Activated CD4-positive, alpha-beta memory T cell treated with anti-CD3 and anti-CD28 coated beads for 36 hours (primary cell): ENCODE measurements at regions of chr12 and their contacts with region 1.

Region 1: GRCh38 chr12:44847888-44848702 is 28.0 kb downstream of the NELL2 start:
- DNase-seq: peak; percentile 81
- H3K4me3 Mint-ChIP-seq: peak overlapping the region; percentile 69
- H3K27ac Mint-ChIP-seq: peak overlapping the region; percentile 94
- H3K4me1 Mint-ChIP-seq: peaks cover 79% of the 10 kb centered on the region
- H3K27me3 Mint-ChIP-seq: no peaks in the 10 kb centered on the region

Region 2: GRCh38 chr12:44827832-44828438 is 20.2 kb before region 1 on chr12:
- CTCF ChIA-PET with region 1: interaction called, 4 read pairs
- POLR2A ChIA-PET with region 1: interaction called, 8 read pairs
- intact Hi-C with region 1: loop called (anchors 1 kb)
- DNase-seq: no peak
- H3K4me3 Mint-ChIP-seq: peak overlapping the region; percentile 42
- H3K27ac Mint-ChIP-seq: peak overlapping the region; percentile 89
- H3K4me1 Mint-ChIP-seq: peaks cover 57% of the 10 kb centered on the region
- H3K27me3 Mint-ChIP-seq: no peaks in the 10 kb centered on the region

Region 3: GRCh38 chr12:44835641-44836379 is 12.3 kb before region 1 on chr12:
- CTCF ChIA-PET with region 1: no interaction called
- POLR2A ChIA-PET with region 1: interaction called, 3 read pairs
- intact Hi-C with region 1: loop called (anchors 1 kb)
- DNase-seq: no peak
- H3K4me3 Mint-ChIP-seq: peak overlapping the region; percentile 6
- H3K27ac Mint-ChIP-seq: peak overlapping the region; percentile 89
- H3K4me1 Mint-ChIP-seq: peaks cover 88% of the 10 kb centered on the region
- H3K27me3 Mint-ChIP-seq: no peaks in the 10 kb centered on the region

Region 4: GRCh38 chr12:44859998-44860689 is 12.0 kb after region 1 on chr12:
- CTCF ChIA-PET with region 1: no interaction called
- POLR2A ChIA-PET with region 1: interaction called, 3 read pairs
- intact Hi-C with region 1: loop called (anchors 1 kb)
- DNase-seq: no peak
- H3K4me3 Mint-ChIP-seq: no peak overlapping the region
- H3K27ac Mint-ChIP-seq: peak overlapping the region; percentile 75
- H3K4me1 Mint-ChIP-seq: peaks cover 77% of the 10 kb centered on the region
- H3K27me3 Mint-ChIP-seq: no peaks in the 10 kb centered on the region